CD8-positive, alpha-beta T cell (primary cell): ENCODE measurements at regions of chr2 and their contacts with region 1.

Region 1: GRCh38 chr2:163541943-163542342 is 193.9 kb downstream of the FIGN start:
- DNase-seq: no peak
- ATAC-seq: no peak
- H3K4me3 ChIP-seq: no peak overlapping the region
- H3K4me3 Mint-ChIP-seq: no peak overlapping the region
- H3K27ac ChIP-seq: no peak overlapping the region
- H3K27ac Mint-ChIP-seq: no peak overlapping the region
- H3K4me1 ChIP-seq: no peaks in the 10 kb centered on the region
- H3K4me1 Mint-ChIP-seq: no peaks in the 10 kb centered on the region
- H3K27me3 ChIP-seq: no peaks in the 10 kb centered on the region
- H3K27me3 Mint-ChIP-seq: no peaks in the 10 kb centered on the region
- CTCF ChIP-seq: no peak

Region 2: DNA sequence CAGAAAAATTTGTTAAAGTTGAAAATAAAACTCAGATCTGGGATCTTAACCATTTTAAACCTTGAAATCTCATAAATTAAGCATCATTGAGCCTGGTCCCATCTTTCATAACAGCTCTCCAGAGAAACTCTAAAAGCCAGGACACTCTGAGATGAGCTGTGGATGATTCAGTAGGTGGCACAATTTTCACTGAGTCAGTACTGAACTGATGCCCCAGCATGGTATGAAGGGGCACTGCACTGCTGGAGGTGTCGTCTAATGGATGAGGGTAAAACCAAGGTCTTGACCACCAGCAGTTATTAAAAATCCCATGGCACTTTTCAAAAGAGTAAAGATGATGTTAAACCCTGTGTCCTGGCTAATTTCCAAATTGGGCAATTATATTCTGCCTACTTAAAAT is 23.3 kb after region 1 on chr2:
- CTCF ChIA-PET with region 1: no interaction called
- POLR2A ChIA-PET with region 1: no interaction called
- intact Hi-C with region 1: loop called in 1 of 2 experiments (anchors 1 kb)
- DNase-seq: no peak
- ATAC-seq: no peak
- H3K4me3 ChIP-seq: no peak overlapping the region
- H3K4me3 Mint-ChIP-seq: no peak overlapping the region
- H3K27ac ChIP-seq: no peak overlapping the region
- H3K27ac Mint-ChIP-seq: no peak overlapping the region
- H3K4me1 ChIP-seq: no peaks in the 10 kb centered on the region
- H3K4me1 Mint-ChIP-seq: no peaks in the 10 kb centered on the region
- H3K27me3 ChIP-seq: no peaks in the 10 kb centered on the region
- H3K27me3 Mint-ChIP-seq: no peaks in the 10 kb centered on the region
- CTCF ChIP-seq: no peak